AG04450 (cell line): ENCODE measurements at regions of chr16 and their contacts with region 1.

Region 1: DNA sequence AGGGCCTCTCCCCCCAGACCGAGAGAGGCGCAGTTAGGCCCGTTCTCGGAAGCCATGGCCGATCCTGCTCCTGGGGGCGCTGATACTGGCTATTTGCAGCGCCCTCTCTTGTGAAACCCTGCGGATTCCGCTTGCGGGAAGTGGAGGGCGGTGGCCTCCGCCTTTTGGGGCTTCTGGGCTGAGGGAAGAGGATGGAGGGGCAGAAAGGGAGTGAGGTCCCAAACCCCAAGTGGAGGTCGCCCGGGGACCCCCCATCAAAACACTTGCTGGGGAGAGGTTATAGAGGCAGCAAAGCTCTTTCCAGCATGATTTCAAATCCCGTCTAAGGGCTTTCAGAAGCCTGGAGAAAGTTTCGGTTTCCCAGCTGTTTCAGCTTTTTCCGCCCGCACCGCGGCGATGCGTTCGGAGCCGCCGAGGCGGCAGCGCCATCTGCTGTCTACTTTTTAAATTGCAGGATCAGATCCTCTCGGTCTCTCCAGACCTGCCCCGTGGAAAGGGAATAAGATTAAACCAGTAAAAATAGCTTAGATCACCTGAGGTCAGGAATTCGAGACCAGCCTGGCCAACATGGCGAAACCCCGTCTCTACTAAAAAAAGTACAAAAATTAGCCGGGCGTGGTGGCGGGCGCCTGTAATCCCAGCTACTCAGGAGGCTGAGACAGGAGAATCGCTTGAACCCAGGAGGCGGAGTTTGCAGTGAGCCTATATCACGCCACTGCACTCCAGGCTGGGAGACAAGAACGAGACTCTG is 15.8 kb downstream of the SNX20 start:
- DNase-seq: peak; percentile 32
- H3K4me3 ChIP-seq: peak overlapping the region; percentile 57
- H3K27ac ChIP-seq: no peak overlapping the region
- H3K27me3 ChIP-seq: no peaks in the 10 kb centered on the region
- CTCF ChIP-seq: peak; percentile 86

Region 2: DNA sequence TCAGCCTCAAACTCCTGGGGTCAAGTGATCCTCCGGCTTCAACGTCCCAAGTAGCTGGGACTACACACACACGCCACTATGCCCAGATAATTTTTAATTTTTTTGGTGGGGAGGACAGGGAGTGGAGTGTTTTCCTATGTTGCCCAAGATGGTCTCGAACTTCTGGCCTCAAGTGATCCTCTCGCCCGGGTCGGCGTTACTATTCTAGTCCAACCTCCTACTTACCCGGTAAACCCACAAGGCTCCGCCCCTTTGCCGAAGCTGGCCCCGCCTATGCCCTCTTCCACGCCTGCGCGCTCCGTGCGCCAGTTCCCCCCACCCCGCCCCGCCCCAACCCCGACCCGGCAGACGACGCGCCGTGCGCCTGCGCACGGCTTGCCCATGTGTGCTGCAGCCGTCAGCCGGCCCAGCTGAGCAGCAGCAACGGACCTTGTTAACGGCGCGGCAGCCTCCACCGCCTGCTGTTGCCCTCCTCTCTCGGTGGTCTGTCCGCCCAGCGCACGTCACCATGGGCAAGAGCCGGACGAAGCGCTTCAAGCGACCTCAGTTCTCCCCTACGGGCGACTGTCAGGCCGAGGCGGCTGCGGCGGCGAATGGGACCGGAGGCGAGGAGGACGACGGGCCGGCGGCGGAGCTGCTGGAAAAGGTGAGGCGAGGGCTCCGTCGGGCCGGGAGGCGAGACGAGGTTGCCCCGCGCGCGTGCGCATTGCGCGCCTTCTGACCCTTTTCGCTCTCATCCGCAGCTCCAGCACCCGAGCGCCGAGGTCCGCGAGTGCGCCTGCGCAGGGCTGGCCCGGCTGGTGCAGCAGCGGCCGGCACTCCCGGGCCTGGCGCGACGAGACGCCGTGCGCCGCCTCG is 599.5 kb before region 1 on chr16 and contains the start of gene HEATR3:
- CTCF ChIA-PET with region 1: interaction called, 15 read pairs
- POLR2A ChIA-PET with region 1: no interaction called
- DNase-seq: peak; percentile 85
- H3K4me3 ChIP-seq: peak within 1 kb of the TSS; percentile 99
- H3K27ac ChIP-seq: peak within 1 kb of the TSS; percentile 84
- H3K27me3 ChIP-seq: no peaks in the 10 kb centered on the region
- CTCF ChIP-seq: no peak
- polyA plus RNA-seq, gene HEATR3: 15.0 and 17.1 TPM in 2 replicates

Region 3: DNA sequence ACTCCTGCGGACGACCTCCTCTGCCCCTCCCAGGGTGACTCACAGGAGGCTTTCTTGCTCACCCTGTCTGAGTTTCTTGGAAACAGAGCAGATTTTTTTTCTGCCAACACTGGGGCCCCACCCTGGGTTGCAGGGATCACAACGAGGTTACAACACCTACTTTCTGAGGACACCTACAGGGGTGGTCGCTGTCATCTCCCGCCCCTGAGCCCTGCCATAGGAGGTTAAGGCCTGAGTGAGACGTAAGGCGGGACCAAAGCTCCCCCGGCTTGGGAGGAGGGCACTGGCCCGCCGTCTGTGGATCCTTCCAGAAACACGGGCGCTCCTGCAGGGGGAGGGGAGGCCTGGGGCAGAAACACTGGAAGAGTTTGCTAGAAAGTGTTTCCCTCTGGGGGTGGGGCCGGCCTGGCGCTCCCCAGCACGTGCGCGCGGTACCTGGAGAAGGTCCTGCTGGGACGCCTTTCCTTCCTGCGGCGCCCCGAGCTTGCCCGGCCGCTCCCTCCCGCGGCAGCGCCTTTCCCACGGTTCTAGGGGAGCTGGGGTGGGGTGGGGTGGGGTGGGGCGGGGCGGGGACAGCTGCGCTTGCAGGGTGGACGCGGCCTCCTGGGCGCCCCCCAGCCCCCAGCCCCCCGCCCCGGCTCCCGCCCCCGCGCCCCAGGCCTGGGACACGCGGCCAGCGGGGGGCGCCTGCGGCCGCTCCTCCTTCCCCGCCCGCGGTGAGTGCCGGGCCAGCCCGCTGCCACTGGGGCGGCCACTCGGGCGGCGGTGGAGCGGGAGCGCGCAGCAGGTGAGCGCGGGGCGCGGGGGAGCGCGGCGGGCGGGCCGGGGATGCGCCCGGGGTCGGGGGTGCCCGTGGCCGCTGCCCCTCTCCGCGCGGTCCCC is 419.6 kb before region 1 on chr16:
- CTCF ChIA-PET with region 1: interaction called, 10 read pairs
- POLR2A ChIA-PET with region 1: interaction called, 6 read pairs
- DNase-seq: no peak
- H3K4me3 ChIP-seq: peak overlapping the region; percentile 54
- H3K27ac ChIP-seq: no peak overlapping the region
- H3K27me3 ChIP-seq: peaks cover 23% of the 10 kb centered on the region
- CTCF ChIP-seq: no peak

Region 4: GRCh38 chr16:50368410-50369132 is 296.7 kb before region 1 on chr16 and contains the start of gene BRD7:
- CTCF ChIA-PET with region 1: interaction called, 54 read pairs
- POLR2A ChIA-PET with region 1: no interaction called
- DNase-seq: no peak
- H3K4me3 ChIP-seq: peak within 1 kb of the TSS; percentile 70
- H3K27ac ChIP-seq: no peak within 1 kb of the TSS
- H3K27me3 ChIP-seq: peaks cover 4% of the 10 kb centered on the region
- CTCF ChIP-seq: peak; percentile 30
- polyA plus RNA-seq, gene BRD7: 49.2 and 69.2 TPM in 2 replicates

Region 5: GRCh38 chr16:50635505-50636392 is 29.6 kb before region 1 on chr16:
- CTCF ChIA-PET with region 1: interaction called, 12 read pairs
- POLR2A ChIA-PET with region 1: no interaction called
- DNase-seq: no peak
- H3K4me3 ChIP-seq: no peak overlapping the region
- H3K27ac ChIP-seq: no peak overlapping the region
- H3K27me3 ChIP-seq: no peaks in the 10 kb centered on the region
- CTCF ChIP-seq: no peak

Region 6: GRCh38 chr16:50696575-50697420 is 31.5 kb after region 1 on chr16:
- CTCF ChIA-PET with region 1: interaction called, 11 read pairs
- POLR2A ChIA-PET with region 1: no interaction called
- DNase-seq: no peak
- H3K4me3 ChIP-seq: no peak overlapping the region
- H3K27ac ChIP-seq: no peak overlapping the region
- H3K27me3 ChIP-seq: peaks cover 9% of the 10 kb centered on the region
- CTCF ChIP-seq: no peak